ENCODE measurements at regions of chr3 and their contacts with region 1.

Region 1: DNA sequence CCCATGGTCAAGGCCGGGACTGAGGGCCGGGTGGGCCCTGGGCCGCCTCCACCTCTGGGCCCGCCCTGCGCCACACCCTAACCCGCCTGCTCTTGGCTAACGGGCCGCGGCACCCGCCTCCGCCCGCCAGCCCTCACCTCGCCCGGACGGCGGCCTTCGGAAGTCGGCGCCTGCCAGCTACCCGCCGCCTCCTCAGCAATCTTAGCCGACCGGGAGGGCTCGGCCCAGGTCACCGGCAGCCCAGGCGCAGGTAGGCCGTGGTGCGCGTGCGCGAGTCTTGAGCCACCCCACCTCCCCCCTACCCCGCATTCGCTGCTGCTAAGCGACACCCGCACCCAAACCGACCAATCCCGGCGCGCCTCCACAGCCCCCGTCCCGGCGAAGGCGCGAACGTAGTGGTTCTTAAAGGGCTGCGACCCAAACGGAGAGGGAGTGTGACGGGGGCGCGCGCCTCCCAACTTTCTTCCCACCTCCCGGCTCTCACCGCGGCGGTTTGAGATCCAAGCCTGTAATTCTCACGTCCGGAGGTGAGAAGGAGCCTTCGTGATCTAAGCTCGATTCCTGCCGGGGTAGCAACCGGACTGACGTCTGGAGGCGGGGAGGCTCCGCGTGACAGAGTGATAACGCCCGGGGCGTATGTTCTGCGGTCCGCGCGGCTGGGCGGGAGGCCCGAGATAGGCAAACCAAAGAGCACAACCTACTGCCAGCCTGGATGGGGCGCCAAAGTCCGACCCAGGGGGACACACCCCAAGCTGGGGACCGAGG is at the start of gene SEC22C:
- DNase-seq: peak; percentile 59
- H3K4me3 ChIP-seq: peak within 1 kb of the TSS; percentile 78
- H3K27ac ChIP-seq: peak within 1 kb of the TSS; percentile 62
- H3K27me3 ChIP-seq: no peaks in the 10 kb centered on the region
- CTCF ChIP-seq: 0 out of 2 replicates have a peak, but pooled peaks have one; percentile 19
- polyA plus RNA-seq, gene SEC22C: 32.3 and 33.0 TPM in 2 replicates

Region 2: GRCh38 chr3:41961750-41962679 is 619.9 kb before region 1 on chr3 and contains the start of gene ULK4:
- CTCF ChIA-PET with region 1: interaction called, 12 read pairs
- POLR2A ChIA-PET with region 1: no interaction called
- DNase-seq: peak; percentile 100
- H3K4me3 ChIP-seq: peak within 1 kb of the TSS; percentile 87
- H3K27ac ChIP-seq: peak within 1 kb of the TSS; percentile 73
- H3K27me3 ChIP-seq: peaks cover 5% of the 10 kb centered on the region
- CTCF ChIP-seq: no peak
- polyA plus RNA-seq, gene ULK4: 2.8 and 3.7 TPM in 2 replicates

Region 3: DNA sequence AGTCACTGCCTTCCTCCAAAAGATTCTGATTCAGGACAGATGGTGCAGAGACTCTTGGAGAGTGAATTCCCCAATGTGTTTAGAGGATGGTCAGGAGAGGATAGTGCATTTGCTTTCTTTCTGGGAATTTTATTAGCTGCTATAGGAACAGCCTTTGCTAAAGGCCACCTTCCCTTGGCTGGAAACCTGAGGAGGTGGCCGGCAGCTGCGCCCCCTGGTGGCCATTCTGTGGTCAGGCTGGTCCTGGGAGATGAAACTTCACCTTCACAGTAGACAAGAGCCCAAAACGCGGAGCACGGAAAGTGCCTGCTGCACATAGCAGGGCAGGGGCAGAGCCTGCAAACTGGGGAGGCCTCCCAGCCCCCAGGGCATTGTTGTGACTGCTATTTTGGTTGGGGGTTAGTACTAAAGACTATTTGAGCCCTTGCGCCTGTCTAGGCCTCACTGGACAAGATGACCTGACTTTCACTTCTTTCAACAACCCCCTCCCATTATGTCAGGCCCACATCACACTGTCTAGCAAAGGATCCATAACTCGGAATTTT is 34.4 kb before region 1 on chr3:
- CTCF ChIA-PET with region 1: interaction called, 15 read pairs
- POLR2A ChIA-PET with region 1: no interaction called
- DNase-seq: peak; percentile 13
- H3K4me3 ChIP-seq: no peak overlapping the region
- H3K27ac ChIP-seq: no peak overlapping the region
- H3K27me3 ChIP-seq: peaks cover 4% of the 10 kb centered on the region
- CTCF ChIP-seq: peak; percentile 94

Region 4: GRCh38 chr3:42600111-42600988 is 18.5 kb after region 1 on chr3 and contains the start of gene NKTR:
- CTCF ChIA-PET with region 1: no interaction called
- POLR2A ChIA-PET with region 1: interaction called, 11 read pairs
- DNase-seq: peak; percentile 97
- H3K4me3 ChIP-seq: peak within 1 kb of the TSS; percentile 85
- H3K27ac ChIP-seq: peak within 1 kb of the TSS; percentile 90
- H3K27me3 ChIP-seq: no peaks in the 10 kb centered on the region
- CTCF ChIP-seq: no peak
- polyA plus RNA-seq, gene NKTR: 40.2 and 56.2 TPM in 2 replicates

Region 5: DNA sequence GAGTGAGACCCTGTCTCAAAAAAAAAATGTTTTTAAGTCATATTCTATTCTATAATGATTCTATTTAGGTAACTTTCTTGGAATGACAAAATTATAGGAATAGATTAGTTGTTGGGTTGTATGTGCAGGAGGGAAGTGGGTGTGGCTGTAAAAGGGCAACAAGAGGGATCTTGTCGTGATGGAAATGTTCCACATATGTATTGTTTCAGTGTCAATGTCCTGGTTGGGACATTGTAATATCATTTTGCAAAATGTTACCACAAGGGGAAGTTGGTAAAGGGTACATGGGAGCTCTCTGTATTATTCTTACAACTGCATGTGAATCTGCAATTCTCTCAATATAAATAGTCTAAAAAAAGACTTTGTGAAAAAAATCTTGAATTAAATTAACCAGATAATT is 1094.5 kb after region 1 on chr3:
- CTCF ChIA-PET with region 1: no interaction called
- POLR2A ChIA-PET with region 1: no interaction called
- DNase-seq: no peak
- H3K4me3 ChIP-seq: no peak overlapping the region
- H3K27ac ChIP-seq: no peak overlapping the region
- H3K27me3 ChIP-seq: no peaks in the 10 kb centered on the region
- CTCF ChIP-seq: no peak

Measured in AG04450 (cell line).